PC-9 (cell line): ENCODE measurements at regions of chr10 and their contacts with region 1.

Region 1: GRCh38 chr10:99560277-99561126 is 27.8 kb downstream of the NKX2-3 start:
- DNase-seq: peak in 1 of 2 experiments; percentile 22
- H3K4me3 ChIP-seq: no peak overlapping the region
- H3K27ac ChIP-seq: no peak overlapping the region
- H3K4me1 ChIP-seq: no peaks in the 10 kb centered on the region
- H3K27me3 ChIP-seq: no peaks in the 10 kb centered on the region
- CTCF ChIP-seq: peak; percentile 82

Region 2: DNA sequence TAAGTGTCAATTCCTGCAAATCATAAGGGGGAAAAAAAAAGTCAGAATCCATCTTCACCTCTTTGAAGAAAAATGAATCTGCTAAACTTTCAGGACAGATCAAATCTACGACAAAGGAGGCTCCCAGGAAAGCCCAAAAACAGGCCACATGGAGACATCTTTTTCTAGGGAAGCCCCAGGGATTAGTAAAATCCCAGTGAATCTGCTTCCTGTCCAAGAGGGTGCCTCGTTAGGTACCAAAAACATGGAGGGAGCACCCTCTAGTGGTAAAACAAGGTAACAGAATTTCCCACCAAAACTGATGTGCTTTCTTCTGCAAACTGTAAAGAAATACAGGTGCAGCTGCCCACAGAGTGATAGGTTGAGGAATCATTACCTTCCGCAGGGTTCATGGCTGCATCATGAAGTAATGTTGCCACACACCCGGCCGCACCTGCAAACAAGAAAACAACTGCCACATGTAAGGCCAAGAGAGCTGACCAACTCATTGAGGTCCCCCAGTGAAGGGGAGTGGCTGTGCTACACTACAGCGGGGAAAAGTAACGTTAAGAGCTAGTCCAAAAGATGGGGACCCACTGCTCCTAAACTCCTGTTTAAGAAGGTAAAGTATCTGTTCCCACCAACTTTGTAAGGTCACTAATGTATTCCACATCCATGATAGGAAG is 51.8 kb after region 1 on chr10:
- CTCF ChIA-PET with region 1: interaction called, 4 read pairs
- POLR2A ChIA-PET with region 1: no interaction called
- intact Hi-C with region 1: loop called (anchors 1 kb)
- DNase-seq: peak; percentile 25 to 55
- H3K4me3 ChIP-seq: no peak overlapping the region
- H3K27ac ChIP-seq: no peak overlapping the region
- H3K4me1 ChIP-seq: no peaks in the 10 kb centered on the region
- H3K27me3 ChIP-seq: no peaks in the 10 kb centered on the region
- CTCF ChIP-seq: peak; percentile 80

Region 3: DNA sequence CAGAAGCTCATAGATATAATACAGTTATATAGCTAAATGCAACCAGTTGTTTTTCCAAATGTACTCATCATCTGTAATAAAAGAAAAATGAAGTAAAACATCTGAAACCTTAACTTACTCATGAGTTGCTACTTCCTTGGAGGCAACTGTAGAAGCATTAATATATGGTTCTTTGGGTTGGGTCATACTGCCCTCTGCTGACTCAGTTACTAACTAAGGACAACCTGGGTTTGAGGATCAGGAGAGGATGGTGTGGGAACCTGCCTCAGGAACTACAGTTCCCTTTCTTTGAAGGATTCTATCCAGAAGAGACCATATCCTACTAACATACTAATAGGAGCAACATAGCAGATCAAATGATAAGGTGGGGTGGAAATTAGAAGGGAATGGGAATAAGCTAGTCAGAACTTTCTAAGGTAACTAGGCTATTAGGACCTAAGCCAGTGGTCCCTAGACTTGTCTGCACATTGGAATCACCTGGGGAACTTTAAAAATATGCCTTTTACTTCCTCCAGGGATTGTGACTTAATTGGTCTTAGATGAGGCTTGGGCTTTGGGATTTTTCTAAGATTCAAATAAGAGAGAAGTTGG is 150.7 kb after region 1 on chr10:
- CTCF ChIA-PET with region 1: no interaction called
- POLR2A ChIA-PET with region 1: no interaction called
- intact Hi-C with region 1: loop called (anchors 1 kb)
- DNase-seq: peak in 1 of 2 experiments; percentile 10
- H3K4me3 ChIP-seq: no peak overlapping the region
- H3K27ac ChIP-seq: no peak overlapping the region
- H3K4me1 ChIP-seq: no peaks in the 10 kb centered on the region
- H3K27me3 ChIP-seq: no peaks in the 10 kb centered on the region
- CTCF ChIP-seq: peak; percentile 67; the same call in 1 of the 2 replicates